Left ventricle myocardium superior (tissue), 1 donor: ENCODE measurements at regions of chr3 and their contacts with region 1.

Region 1: DNA sequence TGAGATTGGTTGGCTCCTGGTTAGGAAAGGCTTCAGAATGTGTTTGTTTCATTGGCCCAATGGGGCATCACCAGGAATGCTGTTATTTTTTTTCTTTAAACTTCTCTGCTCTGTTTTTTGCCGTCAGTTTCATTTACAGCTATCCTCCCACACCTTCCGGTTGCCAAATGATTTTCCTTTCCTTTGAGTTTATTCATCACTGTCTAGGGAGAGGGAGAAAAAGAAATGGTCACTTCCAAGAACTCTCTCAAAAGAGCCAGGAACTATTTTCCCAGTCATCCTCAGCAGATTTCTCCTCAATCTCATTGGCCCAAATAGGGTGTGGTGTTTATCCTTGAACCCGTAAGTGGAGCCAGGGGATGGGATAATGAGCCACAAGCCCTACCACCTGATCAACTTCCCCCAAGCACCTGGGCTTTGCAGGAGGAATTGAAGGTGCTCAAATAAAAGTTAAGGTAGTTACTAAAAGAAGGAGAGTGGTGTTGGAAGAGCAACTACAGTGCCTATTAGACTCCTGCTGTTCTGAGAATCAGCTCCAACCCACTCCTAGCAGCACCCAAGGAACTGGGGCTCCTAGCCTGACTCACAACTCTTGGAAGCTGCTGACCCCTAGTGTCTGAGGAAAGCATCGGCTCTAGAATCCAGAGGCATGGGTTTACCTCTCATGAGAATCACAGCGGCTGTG is 183.8 kb upstream of the IL12A start:
- DNase-seq: peak; percentile 54
- ATAC-seq: peak; percentile 92

Region 2: DNA sequence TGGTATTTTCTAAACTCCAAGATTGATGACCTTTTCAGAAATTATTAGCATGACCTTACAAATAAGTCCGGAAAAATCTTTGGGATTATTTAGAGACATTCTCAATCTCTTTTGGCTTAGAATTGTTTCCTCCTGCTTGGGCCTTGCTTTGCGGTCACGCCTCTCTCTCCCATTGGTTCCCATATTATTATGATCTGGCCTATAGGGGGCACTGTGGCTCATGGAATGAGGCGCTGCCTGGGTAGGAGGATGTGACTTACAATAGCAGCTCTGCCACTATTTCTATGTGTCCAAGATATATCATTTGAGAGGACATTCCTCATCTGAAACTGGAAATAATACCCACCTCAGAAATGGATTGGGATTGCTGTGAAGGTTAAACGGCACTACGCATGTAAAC is 538.1 kb before region 1 on chr3:
- intact Hi-C with region 1: loop called (anchors 5 kb)
- DNase-seq: no peak
- ATAC-seq: no peak

Region 3: DNA sequence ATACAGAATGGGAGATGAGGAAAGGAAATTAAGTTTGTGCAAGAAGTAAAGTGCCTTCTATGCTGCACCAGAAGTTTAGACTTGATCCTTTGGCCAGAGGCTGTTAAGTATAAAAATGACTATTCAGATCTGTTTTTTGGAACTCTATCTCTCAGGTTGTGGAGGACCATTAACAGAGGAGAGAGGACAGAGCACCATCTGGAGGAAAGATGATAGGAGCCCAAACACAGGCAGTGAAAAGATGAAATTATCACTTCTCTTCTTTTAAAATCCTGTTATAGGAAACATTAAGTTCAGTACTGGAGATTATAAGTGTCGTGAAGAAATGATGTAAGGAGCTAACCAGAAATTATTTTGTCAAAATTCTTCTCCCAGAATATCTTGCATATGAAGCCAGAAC is 300.9 kb before region 1 on chr3:
- intact Hi-C with region 1: no loop called
- DNase-seq: no peak
- ATAC-seq: no peak

Region 4: DNA sequence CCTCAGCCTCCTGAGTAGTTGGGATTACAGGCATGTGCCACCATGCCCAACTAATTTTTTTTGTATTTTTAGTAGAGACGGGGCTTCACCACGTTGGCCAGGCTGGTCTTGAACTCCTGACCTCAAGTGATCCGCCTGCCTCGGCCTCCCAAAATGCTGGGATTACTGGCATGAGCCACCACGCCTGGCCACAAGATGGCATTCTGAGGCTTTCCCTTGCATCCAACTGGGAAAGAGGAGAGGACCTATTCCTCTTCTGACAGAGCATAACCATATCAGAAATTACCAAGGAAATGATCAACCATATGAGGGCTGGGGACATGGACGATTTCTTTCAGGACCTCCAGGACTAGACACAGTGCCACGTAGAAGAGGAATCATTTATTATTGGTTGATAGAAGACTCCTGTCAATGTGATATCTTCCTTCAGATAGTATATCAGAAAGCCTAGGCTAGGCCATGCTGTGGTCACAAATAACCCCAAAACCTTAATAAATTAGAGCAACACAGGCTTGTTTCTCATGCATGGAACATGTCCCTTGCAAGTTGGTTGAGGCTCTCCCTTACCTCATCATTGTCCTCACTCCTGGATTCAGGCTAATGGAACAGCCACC is 188.5 kb before region 1 on chr3:
- intact Hi-C with region 1: loop called (anchors 5 kb)
- DNase-seq: peak; percentile 66
- ATAC-seq: peak; percentile 82

Region 5: DNA sequence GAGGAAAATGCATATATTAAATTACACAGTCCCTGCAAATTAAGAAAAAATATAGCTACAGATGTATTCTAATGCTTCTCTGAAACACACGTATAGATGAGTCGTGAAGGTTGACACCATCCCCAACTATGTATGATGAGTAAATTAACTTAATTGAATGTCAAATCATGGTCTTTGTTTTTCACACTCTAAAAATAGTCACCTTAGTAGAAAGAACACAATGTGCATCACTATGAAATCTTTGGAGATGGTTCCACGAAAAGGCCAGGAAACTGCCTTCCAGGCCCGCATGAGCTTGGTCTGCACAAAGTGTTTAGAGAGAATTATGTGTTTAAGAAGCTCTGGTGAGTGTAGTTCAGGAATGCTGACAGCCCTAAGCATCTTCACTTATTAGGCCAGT is 129.6 kb before region 1 on chr3:
- intact Hi-C with region 1: no loop called
- DNase-seq: no peak
- ATAC-seq: peak; percentile 58

Region 6: DNA sequence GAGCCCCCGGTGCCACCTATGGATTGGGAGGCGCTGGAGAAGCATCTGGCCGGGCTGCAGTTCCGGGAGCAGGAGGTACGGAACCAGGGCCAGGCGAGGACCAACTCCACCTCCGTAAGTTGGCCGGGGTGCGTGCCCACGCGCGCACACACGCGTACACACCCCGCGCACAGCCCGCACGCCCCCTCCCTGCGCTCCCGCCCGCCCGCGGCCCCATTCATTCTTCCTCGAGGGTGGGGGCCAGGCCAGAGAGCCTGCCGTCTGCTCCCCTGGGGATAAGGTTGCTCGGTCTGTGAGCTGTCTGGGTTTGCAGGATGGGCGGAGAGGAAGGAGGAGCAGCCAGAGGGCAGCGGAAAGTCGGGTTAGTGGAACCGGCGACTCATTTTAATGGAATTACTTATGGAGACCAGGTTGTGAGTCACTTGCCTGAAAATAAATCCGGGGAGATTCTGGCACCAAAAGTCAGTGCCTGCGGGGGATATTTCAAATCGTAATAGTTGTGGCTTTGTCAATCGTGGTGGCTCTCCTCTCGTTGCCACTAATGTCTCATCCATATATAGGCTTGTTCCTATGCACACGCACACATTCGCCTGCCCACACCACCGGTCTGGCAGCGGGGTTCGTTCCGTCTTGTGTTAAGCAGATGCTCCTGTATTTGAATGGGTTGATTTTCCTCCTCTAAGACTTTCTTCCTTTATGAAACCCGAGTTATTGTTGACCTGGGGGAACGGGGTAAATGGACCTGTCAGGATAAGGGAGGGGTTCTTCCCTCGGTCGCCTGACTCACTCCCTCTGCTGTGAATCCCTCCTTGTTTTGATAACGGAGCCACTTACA is 39.6 kb before region 1 on chr3:
- intact Hi-C with region 1: loop called (anchors 5 kb)
- DNase-seq: peak; percentile 76
- ATAC-seq: peak; percentile 53

Region 7: DNA sequence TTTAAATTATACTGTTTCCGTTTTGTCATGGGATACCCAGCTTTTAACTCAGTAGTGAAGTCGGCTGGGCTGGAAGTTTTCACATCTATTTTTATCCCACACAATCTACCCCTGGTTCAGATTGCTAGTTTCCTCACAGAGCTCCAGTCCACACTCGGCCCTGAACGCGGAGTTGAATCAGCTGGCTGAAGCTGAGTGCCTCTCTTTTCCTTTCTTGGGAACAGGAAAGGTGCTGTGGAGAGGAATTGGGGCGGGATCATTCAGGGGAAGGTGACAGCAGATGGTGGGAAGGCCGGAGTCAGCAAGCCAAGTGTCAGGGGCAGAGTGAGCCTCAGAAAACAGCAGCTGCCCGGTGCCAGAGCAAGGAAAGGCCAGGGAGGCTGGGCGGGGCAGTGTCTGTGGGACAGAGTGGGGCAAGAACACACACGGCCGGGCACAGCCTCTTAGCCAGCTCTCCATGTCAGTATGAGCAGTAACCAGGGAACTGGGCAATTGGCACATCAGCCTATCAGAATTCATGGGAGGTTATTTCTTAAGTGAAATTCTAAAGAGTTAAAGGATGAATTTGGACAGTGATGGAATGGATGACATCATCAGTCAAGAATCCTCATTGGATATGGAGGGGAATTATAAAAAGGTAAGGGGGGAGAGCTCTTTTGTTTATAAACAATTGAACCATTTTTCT is 48.1 kb after region 1 on chr3:
- intact Hi-C with region 1: no loop called
- DNase-seq: peak; percentile 88
- ATAC-seq: peak; percentile 81

Region 8: GRCh38 chr3:159892171-159892795 is 87.4 kb after region 1 on chr3:
- intact Hi-C with region 1: no loop called
- DNase-seq: peak; percentile 58
- ATAC-seq: peak; percentile 88